ENCODE measurements at regions of chr15 and their contacts with region 1.

Region 1: DNA sequence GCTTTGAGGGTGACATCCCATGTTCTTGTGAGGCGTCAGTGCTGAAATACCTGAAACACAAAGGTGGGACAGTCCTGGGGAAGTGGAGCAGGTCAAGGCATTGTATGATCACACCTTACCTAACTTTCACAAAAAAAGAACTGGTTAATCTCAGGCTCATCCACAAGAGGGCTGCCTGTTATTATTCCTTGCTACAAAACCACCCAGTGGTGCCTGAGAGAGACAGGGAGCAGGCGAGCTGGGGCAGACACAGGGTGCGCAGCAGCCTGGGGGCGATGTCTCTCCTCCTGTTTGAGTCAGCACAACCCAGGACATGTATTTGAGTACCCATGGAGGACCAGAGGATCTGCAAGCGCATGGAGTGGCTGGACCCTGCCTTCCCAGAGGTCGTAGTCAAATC is 316.8 kb upstream of the ATP10A start:
- DNase-seq: peak; percentile 54
- H3K4me3 ChIP-seq: no peak overlapping the region
- H3K27ac ChIP-seq: peak overlapping the region in 1 of 2 donors; percentile 21
- H3K4me1 ChIP-seq: peaks cover 9% of the 10 kb centered on the region
- H3K27me3 ChIP-seq: no peaks in the 10 kb centered on the region
- CTCF ChIP-seq: peak in 2 of 3 experiments; percentile 36 to 51
- POLR2A ChIP-seq: no peak

Region 2: GRCh38 chr15:26061248-26061647 is 118.7 kb before region 1 on chr15:
- intact Hi-C with region 1: no loop called
- DNase-seq: no peak
- H3K4me3 ChIP-seq: no peak overlapping the region
- H3K27ac ChIP-seq: no peak overlapping the region
- H3K4me1 ChIP-seq: no peaks in the 10 kb centered on the region
- H3K27me3 ChIP-seq: no peaks in the 10 kb centered on the region
- CTCF ChIP-seq: no peak
- POLR2A ChIP-seq: no peak

Region 3: GRCh38 chr15:26234976-26235767 is 55.3 kb after region 1 on chr15:
- intact Hi-C with region 1: loop called (anchors 10 kb)
- DNase-seq: no peak
- H3K4me3 ChIP-seq: no peak overlapping the region
- H3K27ac ChIP-seq: no peak overlapping the region
- H3K4me1 ChIP-seq: no peaks in the 10 kb centered on the region
- H3K27me3 ChIP-seq: no peaks in the 10 kb centered on the region
- CTCF ChIP-seq: no peak
- POLR2A ChIP-seq: no peak